ENCODE measurements at regions of chr1 and their contacts with region 1.

Region 1: GRCh38 chr1:83942914-83943313 is 56.0 kb downstream of the TTLL7 start:
- DNase-seq: no peak
- ATAC-seq: no peak
- H3K4me3 Mint-ChIP-seq: no peak overlapping the region
- H3K27ac Mint-ChIP-seq: no peak overlapping the region
- H3K4me1 Mint-ChIP-seq: no peaks in the 10 kb centered on the region
- H3K27me3 Mint-ChIP-seq: peaks cover 6% of the 10 kb centered on the region

Region 2: DNA sequence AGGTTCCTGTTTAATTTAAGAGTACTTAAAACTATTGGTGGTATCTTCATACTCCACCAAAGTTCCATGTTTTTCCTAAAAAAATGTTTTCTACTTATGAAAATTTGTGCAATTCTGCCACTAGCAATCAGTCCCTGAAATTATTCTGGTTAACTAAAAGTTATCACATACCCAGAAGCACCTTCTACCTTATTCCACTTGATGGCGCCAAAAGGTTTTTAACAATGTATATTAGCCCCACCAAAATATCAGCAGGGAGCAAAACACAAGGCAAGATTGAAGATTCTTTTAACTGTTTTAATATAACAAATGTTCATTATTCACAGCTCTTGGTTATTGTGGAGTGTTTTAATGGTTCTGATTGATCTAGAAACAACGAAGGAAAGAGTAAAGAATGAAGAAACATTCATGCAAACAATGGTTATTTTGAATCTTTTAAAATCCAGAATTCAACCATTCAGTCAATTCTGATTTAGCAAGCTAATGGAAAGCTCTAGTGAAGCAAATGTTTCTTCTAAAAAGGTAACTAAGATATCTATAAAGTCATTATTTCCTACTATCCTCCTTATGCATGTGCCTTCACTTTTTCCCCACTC is 11.2 kb before region 1 on chr1:
- CTCF ChIA-PET with region 1: interaction called, 19 read pairs
- POLR2A ChIA-PET with region 1: no interaction called
- DNase-seq: peak; percentile 38
- ATAC-seq: peak; percentile 70
- H3K4me3 Mint-ChIP-seq: no peak overlapping the region
- H3K27ac Mint-ChIP-seq: no peak overlapping the region
- H3K4me1 Mint-ChIP-seq: no peaks in the 10 kb centered on the region
- H3K27me3 Mint-ChIP-seq: peaks cover 13% of the 10 kb centered on the region

Measured in activated CD8-positive, alpha-beta T cell treated with anti-CD3 and anti-CD28 coated beads, Interleukin-2, amount 10 ng/mL, durations not matched to agents 7 days and 5 days (primary cell).